Dendritic cell treated with granulocyte-macrophage colony-stimulating factor and Interleukin-4, amounts not matched to agents 40 ng/mL and 50 ng/mL, for 4 days (primary cell): ENCODE measurements at regions of chr17 and their contacts with region 1.

Region 1: GRCh38 chr17:43576563-43577229 is 30.6 kb upstream of the ETV4 start:
- H3K4me3 Mint-ChIP-seq: no peak overlapping the region
- H3K27ac Mint-ChIP-seq: no peak overlapping the region
- H3K4me1 Mint-ChIP-seq: peaks cover 9% of the 10 kb centered on the region
- H3K27me3 Mint-ChIP-seq: peaks cover 36% of the 10 kb centered on the region

Region 2: DNA sequence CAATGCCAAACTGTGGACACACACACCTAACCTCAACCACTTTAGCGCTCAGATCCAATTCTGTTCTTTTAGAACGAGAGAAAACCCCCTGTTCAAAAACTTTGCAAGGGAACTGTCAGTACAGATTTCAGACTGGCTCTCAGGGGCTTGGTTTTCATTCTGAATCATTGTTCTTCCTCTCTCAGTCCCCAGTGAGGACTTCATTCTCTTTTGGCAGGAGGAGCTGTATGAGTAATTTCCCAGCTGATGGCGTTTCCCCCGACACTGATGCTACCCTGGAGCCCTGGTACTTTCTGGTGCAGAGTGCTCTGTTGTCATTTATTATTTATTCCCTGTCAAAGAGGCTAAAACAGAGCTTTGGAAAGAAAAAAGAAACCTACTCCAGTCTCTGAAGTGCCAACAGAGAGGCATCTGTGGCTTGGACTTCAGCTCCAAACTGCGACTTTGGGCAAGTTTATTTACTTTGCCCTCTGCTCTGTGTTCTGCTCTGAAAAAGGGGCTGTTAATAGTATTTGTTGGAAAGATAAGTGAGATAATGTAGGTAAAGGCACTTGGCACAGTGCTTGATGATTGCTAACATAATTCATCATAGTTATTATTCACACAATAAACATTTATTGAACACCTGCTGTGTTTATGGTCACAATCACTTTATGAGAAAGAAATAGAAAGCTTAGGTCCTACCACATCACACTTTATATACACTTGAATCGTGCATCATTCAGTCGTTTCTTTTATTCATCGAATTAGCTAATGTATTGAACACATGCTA is 58.9 kb before region 1 on chr17:
- intact Hi-C with region 1: no loop called
- H3K4me3 Mint-ChIP-seq: no peak overlapping the region
- H3K27ac Mint-ChIP-seq: no peak overlapping the region
- H3K4me1 Mint-ChIP-seq: no peaks in the 10 kb centered on the region
- H3K27me3 Mint-ChIP-seq: no peaks in the 10 kb centered on the region

Region 3: GRCh38 chr17:43628089-43628650 is 51.5 kb after region 1 on chr17:
- intact Hi-C with region 1: no loop called
- H3K4me3 Mint-ChIP-seq: no peak overlapping the region
- H3K27ac Mint-ChIP-seq: no peak overlapping the region
- H3K4me1 Mint-ChIP-seq: peaks cover 9% of the 10 kb centered on the region
- H3K27me3 Mint-ChIP-seq: peaks cover 20% of the 10 kb centered on the region

Region 4: DNA sequence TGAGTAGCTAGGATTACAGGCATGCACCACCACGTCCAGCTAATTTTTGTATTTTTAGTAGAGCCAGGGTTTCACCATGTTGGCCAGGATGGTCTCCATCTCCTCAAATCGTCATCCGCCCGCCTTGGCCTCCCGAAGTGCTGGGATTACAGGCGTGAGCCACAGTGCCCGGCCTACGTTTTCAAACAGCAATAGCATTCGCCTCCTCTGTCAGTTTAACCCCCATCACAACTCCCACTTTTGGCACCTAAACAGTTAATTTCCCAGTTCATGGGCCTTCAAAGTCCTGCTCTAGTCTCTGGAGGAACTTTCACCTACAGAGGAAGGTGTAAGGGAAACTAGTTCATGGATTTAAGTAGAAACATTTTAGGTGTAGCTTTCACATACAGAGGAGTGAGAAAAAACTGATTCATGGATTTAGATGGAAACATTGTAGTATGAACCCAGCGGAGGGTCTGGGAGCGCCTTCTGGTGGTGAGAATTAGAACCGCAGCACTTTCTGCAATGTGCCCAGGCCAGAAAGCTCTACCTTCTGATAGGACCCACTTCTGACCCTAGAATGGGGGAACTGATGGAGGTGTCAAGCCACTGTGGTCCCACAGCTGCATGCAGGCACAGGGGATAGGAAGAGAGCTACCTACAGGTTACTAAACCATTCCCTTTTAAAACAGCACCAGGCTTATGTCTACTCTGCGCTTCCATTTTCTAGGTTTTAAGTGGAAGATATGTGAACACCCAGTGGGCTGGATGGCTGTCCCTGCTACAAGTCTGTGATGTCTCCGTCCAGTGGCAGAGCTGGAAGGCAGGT is 97.0 kb after region 1 on chr17:
- intact Hi-C with region 1: loop called (anchors 1 kb)
- H3K4me3 Mint-ChIP-seq: no peak overlapping the region
- H3K27ac Mint-ChIP-seq: no peak overlapping the region
- H3K4me1 Mint-ChIP-seq: peaks cover 30% of the 10 kb centered on the region
- H3K27me3 Mint-ChIP-seq: peaks cover 16% of the 10 kb centered on the region

Region 5: DNA sequence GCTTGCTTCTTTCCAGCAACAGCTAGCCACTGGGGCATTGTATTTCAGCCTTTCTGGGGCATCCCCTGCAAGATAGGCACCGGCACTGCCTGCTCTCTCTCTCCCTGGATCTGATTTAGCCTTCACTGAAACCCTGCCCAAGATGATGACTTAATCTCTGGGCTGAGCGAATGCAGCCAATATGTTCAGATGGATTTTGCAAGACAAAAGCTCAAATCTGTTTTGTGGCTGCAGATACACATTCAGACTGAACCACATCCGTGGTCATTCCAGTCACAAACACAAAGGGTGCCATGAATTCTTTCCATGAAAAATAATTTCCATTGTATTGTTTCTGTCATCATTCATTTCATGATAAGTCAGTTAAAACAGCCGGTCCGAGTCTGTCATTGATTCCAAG is 157.7 kb after region 1 on chr17:
- intact Hi-C with region 1: no loop called
- H3K4me3 Mint-ChIP-seq: no peak overlapping the region
- H3K27ac Mint-ChIP-seq: no peak overlapping the region
- H3K4me1 Mint-ChIP-seq: no peaks in the 10 kb centered on the region
- H3K27me3 Mint-ChIP-seq: peaks cover 16% of the 10 kb centered on the region